Activated CD4-positive, alpha-beta memory T cell treated with anti-CD3 and anti-CD28 coated beads, Interleukin-2, amount 10 ng/mL, durations not matched to agents 7 days and 5 days (primary cell): ENCODE measurements at regions of chr6 and their contacts with region 1.

Region 1: GRCh38 chr6:72616406-72617015 is 5.4 kb upstream of the KCNQ5 start:
- DNase-seq: no peak
- H3K4me3 Mint-ChIP-seq: no peak overlapping the region
- H3K27ac Mint-ChIP-seq: no peak overlapping the region
- H3K4me1 Mint-ChIP-seq: peaks cover 32% of the 10 kb centered on the region
- H3K27me3 Mint-ChIP-seq: peaks cover 21% of the 10 kb centered on the region

Region 2: DNA sequence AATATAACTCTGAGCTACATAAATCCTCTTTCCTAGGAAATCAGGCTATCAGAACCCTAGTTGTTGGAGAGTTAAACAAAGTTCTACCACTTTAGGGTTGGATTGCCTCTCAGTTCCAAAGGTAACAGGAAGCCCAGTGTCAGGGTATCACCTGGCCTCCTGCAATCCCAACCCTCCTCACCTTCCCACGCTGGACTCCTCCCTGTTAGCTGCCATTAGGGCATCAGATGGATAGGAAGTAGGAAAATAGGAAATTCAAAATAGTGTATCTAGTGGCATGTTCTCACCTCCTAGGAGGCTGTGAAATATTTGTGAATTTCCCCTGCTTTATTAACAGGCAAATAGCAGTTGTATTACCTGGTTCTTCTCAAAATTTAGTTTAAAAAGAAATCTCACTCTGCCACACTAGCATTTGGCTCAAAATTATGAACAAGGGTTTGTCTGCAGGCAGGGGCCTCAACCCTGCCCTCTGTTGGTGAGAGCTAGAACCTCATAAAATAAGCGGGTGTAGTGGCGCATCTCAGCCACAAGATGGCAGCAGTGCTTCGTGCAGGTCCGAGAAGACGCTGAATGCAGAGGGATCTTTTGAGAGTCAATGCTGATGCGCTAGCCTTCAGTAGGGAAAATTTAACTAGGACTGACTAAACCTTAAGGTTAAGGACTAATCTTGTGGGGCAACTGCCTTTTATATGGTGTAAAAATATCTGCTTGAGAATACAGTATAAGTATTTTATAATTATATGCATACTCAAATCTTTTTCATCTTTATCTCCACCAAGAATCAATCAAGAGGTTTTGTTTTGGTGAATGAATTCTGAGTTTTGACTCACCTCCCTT is 204.4 kb before region 1 on chr6:
- CTCF ChIA-PET with region 1: interaction called, 10 read pairs
- POLR2A ChIA-PET with region 1: no interaction called
- DNase-seq: peak; percentile 82
- H3K4me3 Mint-ChIP-seq: no peak overlapping the region
- H3K27ac Mint-ChIP-seq: no peak overlapping the region
- H3K4me1 Mint-ChIP-seq: no peaks in the 10 kb centered on the region
- H3K27me3 Mint-ChIP-seq: peaks cover 7% of the 10 kb centered on the region

Region 3: DNA sequence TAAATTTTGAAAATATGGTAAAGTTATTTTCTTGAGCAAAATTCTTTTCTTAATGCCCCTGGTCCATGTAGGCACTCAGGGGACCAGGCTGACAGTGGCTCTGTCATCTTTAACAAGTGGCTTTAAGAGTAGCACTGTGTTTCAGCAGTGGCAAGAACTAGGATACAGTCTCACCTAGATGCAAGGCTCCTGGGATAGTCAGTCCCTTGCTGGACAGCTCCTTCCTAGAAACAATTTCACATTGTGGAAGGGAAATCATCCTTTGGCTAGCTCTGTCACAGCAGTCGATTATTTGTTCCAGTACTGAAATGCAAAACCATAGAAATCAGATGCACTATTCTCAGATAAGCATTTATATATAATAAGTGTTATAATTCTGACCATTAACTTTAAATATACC is 170.1 kb before region 1 on chr6:
- CTCF ChIA-PET with region 1: no interaction called
- POLR2A ChIA-PET with region 1: no interaction called
- DNase-seq: no peak
- H3K4me3 Mint-ChIP-seq: no peak overlapping the region
- H3K27ac Mint-ChIP-seq: no peak overlapping the region
- H3K4me1 Mint-ChIP-seq: no peaks in the 10 kb centered on the region
- H3K27me3 Mint-ChIP-seq: peaks cover 6% of the 10 kb centered on the region

Region 4: DNA sequence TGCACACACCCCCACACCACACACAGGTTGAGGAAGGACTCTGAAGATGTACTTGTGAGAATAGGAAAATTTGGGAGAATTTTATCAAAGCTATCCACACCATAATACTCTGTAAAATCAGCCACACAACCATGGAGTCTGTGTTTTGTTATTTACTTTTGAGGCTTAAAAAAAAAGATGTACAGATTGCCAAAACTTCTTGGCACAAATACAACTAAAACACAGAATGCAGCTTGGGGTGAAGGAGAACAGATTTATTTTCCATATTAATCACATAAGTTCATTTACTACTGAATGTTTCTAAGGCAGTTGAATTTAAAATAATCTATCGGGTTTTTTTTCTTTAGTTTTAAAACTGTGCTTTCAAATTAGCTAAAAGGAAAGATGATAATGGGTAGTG is 27.4 kb before region 1 on chr6:
- CTCF ChIA-PET with region 1: interaction called, 14 read pairs
- POLR2A ChIA-PET with region 1: no interaction called
- DNase-seq: no peak
- H3K4me3 Mint-ChIP-seq: no peak overlapping the region
- H3K27ac Mint-ChIP-seq: no peak overlapping the region
- H3K4me1 Mint-ChIP-seq: peaks cover 9% of the 10 kb centered on the region
- H3K27me3 Mint-ChIP-seq: peaks cover 7% of the 10 kb centered on the region

Region 5: GRCh38 chr6:72627539-72627938 is 11.0 kb after region 1 on chr6:
- CTCF ChIA-PET with region 1: interaction called, 10 read pairs
- POLR2A ChIA-PET with region 1: interaction called, 3 read pairs
- DNase-seq: no peak
- H3K4me3 Mint-ChIP-seq: no peak overlapping the region
- H3K27ac Mint-ChIP-seq: no peak overlapping the region
- H3K4me1 Mint-ChIP-seq: peaks cover 31% of the 10 kb centered on the region
- H3K27me3 Mint-ChIP-seq: no peaks in the 10 kb centered on the region

Region 6: GRCh38 chr6:72894091-72894490 is 277.6 kb after region 1 on chr6:
- CTCF ChIA-PET with region 1: no interaction called
- POLR2A ChIA-PET with region 1: no interaction called
- DNase-seq: no peak
- H3K4me3 Mint-ChIP-seq: no peak overlapping the region
- H3K27ac Mint-ChIP-seq: no peak overlapping the region
- H3K4me1 Mint-ChIP-seq: no peaks in the 10 kb centered on the region
- H3K27me3 Mint-ChIP-seq: no peaks in the 10 kb centered on the region

Region 7: GRCh38 chr6:73129653-73130443 is 513.3 kb after region 1 on chr6:
- CTCF ChIA-PET with region 1: interaction called, 120 read pairs
- POLR2A ChIA-PET with region 1: interaction called, 3 read pairs
- DNase-seq: peak; percentile 81
- H3K4me3 Mint-ChIP-seq: peak overlapping the region; percentile 0
- H3K27ac Mint-ChIP-seq: no peak overlapping the region
- H3K4me1 Mint-ChIP-seq: peaks cover 4% of the 10 kb centered on the region
- H3K27me3 Mint-ChIP-seq: peaks cover 2% of the 10 kb centered on the region

Region 8: DNA sequence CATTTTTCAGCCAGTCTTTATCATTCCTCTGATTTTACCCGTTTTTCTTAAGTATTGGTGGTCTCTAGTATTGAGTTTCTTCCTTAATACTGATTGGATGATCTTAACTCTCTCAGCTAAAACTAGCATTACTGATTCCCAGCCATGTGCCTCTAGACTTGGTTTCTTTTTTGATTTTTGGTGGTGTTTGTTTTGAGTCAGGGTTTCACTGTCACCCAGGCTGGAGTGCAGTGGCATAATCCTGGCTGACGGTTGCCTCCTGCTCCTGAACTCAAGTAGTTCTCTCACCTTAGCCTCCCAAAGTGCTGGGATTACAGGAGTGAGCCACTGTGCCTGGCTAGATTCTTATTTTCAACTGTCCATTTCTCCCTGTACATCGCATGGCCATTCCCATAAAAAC is 712.7 kb after region 1 on chr6:
- CTCF ChIA-PET with region 1: interaction called, 10 read pairs
- POLR2A ChIA-PET with region 1: no interaction called
- DNase-seq: no peak
- H3K4me3 Mint-ChIP-seq: no peak overlapping the region
- H3K27ac Mint-ChIP-seq: no peak overlapping the region
- H3K4me1 Mint-ChIP-seq: peaks cover 14% of the 10 kb centered on the region
- H3K27me3 Mint-ChIP-seq: peaks cover 27% of the 10 kb centered on the region